ENCODE measurements at regions of chr2 and their contacts with region 1.

Region 1: GRCh38 chr2:158845444-158845843 is 50.3 kb downstream of the DAPL1 start:
- DNase-seq: no peak
- ATAC-seq: no peak
- H3K4me3 ChIP-seq: no peak overlapping the region
- H3K27ac ChIP-seq: no peak overlapping the region
- H3K4me1 ChIP-seq: no peaks in the 10 kb centered on the region
- H3K27me3 ChIP-seq: peaks cover 7% of the 10 kb centered on the region
- CTCF ChIP-seq: no peak

Region 2: DNA sequence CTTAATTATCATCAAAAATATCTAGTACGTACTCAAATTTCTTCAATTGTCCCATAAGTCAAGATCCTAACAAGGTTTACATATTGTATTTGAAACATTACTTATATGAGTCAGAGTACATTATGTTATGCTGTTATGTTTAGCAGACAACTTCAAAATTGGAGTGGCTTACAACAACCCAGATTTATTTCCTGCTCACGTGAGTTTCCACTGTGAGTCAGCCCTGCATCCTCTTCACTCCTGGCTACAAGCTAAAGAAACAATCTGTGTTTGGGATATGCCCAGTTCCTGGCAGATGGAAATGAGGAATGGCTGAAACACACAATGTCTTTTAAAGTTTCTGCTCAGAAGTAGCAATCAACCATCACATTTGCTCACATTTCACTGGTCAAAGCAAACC is 91.5 kb after region 1 on chr2:
- CTCF ChIA-PET with region 1: interaction called, 12 read pairs
- POLR2A ChIA-PET with region 1: no interaction called
- in situ Hi-C with region 1: no loop called
- intact Hi-C with region 1: no loop called
- DNase-seq: no peak
- ATAC-seq: no peak
- H3K4me3 ChIP-seq: no peak overlapping the region
- H3K27ac ChIP-seq: no peak overlapping the region
- H3K4me1 ChIP-seq: no peaks in the 10 kb centered on the region
- H3K27me3 ChIP-seq: no peaks in the 10 kb centered on the region; the same call in 1 of the 2 replicates
- CTCF ChIP-seq: no peak

Measured in Panc1 (cell line).